Right cardiac atrium (tissue), 5 donors: ENCODE measurements at regions of chr12 and their contacts with region 1.

Region 1: GRCh38 chr12:133130038-133130807 is at the starts of genes ZNF10 and ZNF891:
- DNase-seq: peak; percentile 97 to 99 (median 99)
- ATAC-seq: peak; percentile 99
- H3K4me3 ChIP-seq: peak within 1 kb of the TSS; percentile 77
- H3K27ac ChIP-seq: peak within 1 kb of the TSS; percentile 80
- H3K4me1 ChIP-seq: no peaks in the 10 kb centered on the region
- H3K27me3 ChIP-seq: no peaks in the 10 kb centered on the region
- total RNA-seq, gene ZNF10: 7.7 to 11.4 (median 10.4) TPM
- total RNA-seq, gene ZNF891: 1.2 to 1.5 (median 1.3) TPM

Region 2: GRCh38 chr12:132812631-132813305 is 317.5 kb before region 1 on chr12:
- intact Hi-C with region 1: no loop called
- DNase-seq: peak in 1 of 3 donors; percentile 18
- ATAC-seq: no peak
- H3K4me3 ChIP-seq: no peak overlapping the region
- H3K27ac ChIP-seq: no peak overlapping the region
- H3K4me1 ChIP-seq: no peaks in the 10 kb centered on the region
- H3K27me3 ChIP-seq: no peaks in the 10 kb centered on the region

Region 3: DNA sequence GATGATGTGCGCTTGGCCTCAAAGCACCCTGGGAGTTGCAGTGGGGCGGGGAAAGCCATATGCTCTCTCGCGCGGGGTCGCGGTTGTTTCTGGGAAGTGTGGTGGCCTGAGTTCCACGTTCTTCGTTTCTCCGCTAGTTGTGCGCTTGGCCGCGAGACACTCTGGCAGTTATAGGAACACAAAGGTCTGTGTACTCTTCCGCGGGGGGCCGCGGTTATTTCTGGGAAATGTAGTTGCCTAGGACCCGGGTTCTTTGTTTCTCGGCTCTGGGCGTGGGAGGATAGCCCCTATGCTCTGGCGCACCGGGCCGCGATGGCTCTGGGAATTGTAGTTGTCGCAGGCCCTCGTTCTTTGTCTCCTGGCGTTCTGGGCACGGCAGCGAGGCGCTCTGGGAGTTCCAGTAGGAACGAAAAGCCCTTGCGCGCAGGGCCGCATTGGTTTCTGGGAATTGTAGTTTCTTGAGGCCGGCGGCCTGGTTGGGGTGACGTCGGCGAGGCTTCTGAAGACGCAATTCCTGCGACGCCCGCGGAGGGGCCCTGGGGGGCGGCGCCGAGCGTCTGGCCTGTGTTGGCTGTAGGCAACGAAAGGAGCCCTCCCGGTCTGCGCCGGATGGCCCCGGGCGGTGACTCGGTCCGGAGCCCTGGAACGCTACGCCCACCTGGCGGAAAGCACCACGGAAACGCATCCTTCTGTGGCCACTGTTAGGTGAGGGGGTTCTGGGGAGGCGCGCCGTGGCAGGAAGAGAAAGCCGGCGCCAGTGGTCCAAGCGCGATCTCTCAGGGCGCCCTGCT is 49.7 kb before region 1 on chr12 and contains the start of gene ZNF140:
- intact Hi-C with region 1: loop called in 1 of 4 experiments (anchors 5 kb)
- DNase-seq: peak; percentile 97 to 99 (median 98)
- ATAC-seq: peak; percentile 91 to 95
- H3K4me3 ChIP-seq: peak within 1 kb of the TSS; percentile 66
- H3K27ac ChIP-seq: peak within 1 kb of the TSS; percentile 100
- H3K4me1 ChIP-seq: no peaks in the 10 kb centered on the region
- H3K27me3 ChIP-seq: no peaks in the 10 kb centered on the region
- total RNA-seq, gene ZNF140: 8.5 to 10.7 (median 10.0) TPM

Region 4: DNA sequence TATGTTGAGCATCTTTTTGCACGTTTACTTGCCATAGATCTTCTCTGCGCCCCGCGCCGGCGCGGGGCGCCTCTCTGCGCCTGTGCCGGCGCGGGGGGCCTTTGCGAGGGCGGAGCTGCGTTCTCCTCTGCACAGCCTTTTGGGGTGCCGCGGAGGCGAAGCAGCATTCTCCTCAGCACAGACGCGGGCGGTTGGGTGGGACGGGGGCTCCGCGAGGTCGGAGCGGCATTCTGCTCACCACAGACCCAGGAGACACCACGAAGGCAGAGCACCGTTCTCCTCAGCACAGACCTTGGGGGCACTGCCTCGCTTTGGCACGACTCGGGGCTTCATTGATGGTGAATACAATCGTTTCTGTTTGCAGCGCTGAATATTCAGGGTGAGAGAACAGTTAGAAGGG is 133.9 kb after region 1 on chr12:
- intact Hi-C with region 1: no loop called
- DNase-seq: no peak
- ATAC-seq: peak; percentile 31 to 38
- H3K4me3 ChIP-seq: no peak overlapping the region
- H3K27ac ChIP-seq: no peak overlapping the region
- H3K4me1 ChIP-seq: no peaks in the 10 kb centered on the region
- H3K27me3 ChIP-seq: no peaks in the 10 kb centered on the region